Cardiac septum (tissue), 1 donor: ENCODE measurements at regions of chr5 and their contacts with region 1.

Region 1: GRCh38 chr5:55691265-55692105 is 20.6 kb downstream of the SLC38A9 start:
- DNase-seq: no peak

Region 2: DNA sequence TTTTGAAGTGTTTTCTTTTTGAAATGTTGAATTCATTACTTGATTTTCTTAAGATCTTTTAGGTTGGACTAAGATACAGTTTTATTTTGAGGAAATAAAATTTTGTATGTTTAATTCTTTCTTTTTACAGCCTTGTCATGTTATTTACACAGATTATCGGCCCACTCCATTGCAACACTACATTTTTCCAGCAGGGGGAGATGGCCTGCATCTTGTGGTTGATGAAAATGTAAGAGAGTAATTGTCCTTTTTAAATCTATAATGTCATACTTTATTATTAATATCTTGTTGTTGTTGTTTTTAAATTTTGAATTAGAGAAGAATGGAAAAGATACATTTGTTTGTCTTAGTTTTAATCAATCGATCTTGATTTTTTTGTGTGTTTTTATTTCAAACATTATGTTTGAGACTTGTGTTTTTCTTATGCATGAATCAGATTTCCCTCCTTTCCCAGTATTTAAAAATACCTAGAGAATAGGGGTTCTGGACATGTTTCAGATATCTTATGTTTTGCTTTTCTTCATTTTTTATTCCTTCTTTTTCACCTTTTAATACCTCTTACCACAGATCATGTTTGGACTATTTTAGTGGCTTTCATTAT is 347.0 kb before region 1 on chr5:
- intact Hi-C with region 1: loop called (anchors 5 kb)
- DNase-seq: no peak

Region 3: GRCh38 chr5:55407059-55407684 is 284.3 kb before region 1 on chr5:
- intact Hi-C with region 1: loop called (anchors 2 kb)
- DNase-seq: no peak

Region 4: DNA sequence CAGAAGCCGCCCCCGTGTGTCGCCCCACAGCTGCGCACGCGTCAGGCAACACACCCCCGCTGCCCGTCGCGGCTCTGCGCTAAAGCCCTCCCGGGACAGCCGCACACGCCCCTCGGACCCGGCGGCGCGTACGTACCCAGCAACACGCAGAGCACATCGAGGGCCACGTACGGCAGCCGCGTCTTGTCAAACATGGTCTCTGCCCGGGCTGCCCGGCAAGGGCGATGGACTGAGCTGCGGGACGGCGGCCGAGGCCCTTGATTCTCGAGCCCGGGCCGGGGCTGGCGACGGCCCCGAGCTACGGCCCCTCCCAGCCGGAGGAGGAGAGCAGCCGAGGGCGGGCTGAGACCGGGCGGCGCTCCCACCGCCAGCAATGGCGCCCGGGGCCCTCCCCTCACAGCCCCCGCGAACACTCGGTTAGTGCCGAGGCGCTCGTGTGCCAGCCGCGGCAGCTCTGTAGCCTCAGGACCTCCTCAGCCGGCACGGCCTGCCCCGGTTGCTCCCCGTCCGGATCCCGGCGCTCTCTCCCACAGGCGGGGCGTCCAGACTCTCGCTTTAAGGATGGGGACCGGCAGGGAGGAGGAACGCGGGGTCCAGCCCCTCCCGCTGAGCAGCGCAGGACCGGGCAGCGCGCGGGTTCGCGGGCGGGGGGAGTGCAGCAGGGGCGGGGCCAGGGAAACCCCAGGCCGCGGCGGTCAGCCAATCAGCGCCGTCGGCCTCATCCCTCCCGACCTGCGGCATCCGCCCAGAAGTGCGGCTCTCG is 156.9 kb before region 1 on chr5 and contains the start of gene PLPP1:
- intact Hi-C with region 1: loop called (anchors 2 kb)
- DNase-seq: peak; percentile 96
- total RNA-seq, gene PLPP1: 102 TPM

Region 5: DNA sequence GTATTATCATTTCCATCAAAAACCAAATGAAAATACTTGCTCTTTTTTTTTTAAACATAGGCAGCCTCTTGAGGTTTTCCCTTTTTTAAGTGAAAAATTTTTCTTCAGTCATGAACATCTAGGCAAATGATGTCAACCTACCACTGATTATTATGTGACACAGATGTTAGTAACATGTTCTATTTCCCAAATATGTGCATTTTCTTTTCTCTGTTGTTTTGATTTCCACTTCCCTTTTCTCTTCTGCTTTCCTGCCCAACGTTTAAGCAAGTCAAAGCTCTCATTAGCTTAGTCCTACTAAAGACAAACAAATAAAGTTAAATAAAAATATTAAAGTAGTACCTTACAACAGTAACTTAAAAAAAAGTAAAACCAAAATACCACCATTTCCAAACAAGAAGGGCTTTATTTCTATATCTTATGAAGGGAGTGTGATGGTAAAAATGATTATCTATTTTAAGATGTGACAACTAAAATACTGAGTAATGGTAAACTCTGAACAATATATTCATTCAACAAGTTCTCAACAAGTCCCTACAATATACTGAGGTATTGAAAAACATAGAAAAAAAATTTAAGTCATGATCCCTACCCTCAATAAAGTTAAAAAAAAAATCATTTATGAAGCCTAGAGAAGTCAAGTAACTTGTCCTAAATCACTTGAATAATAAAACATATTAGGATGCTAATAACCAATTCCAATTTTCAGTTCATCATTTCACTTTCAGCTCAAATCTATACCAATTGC is 11.3 kb after region 1 on chr5:
- intact Hi-C with region 1: no loop called
- DNase-seq: no peak

Region 6: DNA sequence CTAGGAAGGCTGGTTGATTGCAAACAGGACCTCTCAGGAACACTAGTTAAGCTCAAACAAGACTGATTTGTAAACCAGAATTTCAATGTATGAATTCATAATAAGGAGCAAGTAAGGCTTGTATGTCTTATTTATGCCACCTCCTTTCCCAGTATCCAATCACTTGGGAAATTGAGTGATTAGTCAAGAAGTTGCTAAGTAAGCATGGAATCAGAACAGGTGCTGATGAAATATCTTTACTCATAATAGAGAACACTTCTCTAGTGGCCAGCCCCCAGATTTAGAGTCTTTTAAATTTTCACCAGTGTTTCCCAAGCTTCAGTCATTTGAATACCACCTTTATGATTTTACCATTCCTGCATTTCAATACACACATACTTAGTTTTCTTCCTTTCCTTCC is 41.1 kb after region 1 on chr5:
- intact Hi-C with region 1: no loop called
- DNase-seq: no peak

Region 7: GRCh38 chr5:55868846-55869245 is 177.4 kb after region 1 on chr5:
- intact Hi-C with region 1: no loop called
- DNase-seq: no peak

Region 8: DNA sequence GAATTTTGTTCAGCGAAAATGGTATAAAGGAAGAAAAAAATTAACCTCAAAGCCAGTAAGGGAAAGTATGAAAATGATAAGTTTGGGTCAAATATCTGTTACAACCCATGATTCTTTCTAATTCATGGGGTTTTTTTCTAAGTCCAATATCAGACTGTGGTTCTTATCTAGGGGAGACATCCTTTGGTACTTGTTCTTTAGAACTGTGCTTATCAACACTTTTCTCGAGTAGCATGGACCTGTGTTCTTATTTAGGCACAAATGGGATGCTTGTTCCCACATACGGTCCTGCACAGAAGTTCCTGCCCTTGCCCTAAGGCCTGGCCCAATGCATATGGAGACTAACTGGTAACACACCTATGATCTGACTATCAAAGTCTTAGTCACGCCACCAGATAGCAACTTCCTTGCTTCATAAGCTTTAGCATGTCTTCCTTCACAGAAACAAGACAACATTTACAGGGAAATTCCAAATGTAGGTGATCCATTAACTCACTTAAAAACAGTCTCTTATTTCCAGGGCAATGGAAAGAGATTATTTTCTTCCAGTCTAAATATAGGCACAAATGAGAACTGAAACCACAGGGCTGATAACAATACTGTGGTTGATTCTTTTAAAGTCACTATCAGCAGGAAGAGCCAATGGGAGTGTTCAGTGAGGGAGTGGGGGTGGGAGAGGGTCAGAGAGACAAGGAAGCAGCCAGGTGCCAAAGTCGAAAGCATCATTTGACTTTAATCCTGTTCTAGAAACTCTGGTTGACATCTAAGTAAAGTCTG is 810.5 kb after region 1 on chr5:
- intact Hi-C with region 1: no loop called
- DNase-seq: no peak